ENCODE measurements at regions of chr6 and their contacts with region 1.

Region 1: GRCh38 chr6:73675466-73676098 is 20.4 kb upstream of the CD109 start:
- DNase-seq: peak in 4 of 5 donors; percentile 36 to 65 (median 52)
- H3K4me3 ChIP-seq: no peak overlapping the region
- H3K27ac ChIP-seq: no peak overlapping the region
- H3K4me1 ChIP-seq: no peaks in the 10 kb centered on the region
- H3K27me3 ChIP-seq: no peaks in the 10 kb centered on the region
- CTCF ChIP-seq: peak; percentile 43 to 50 (median 47)
- EP300 ChIP-seq: no peak
- POLR2A ChIP-seq: no peak

Region 2: GRCh38 chr6:73732845-73733675 is 57.5 kb after region 1 on chr6:
- intact Hi-C with region 1: loop called in 1 of 4 experiments (anchors 10 kb)
- DNase-seq: peak; percentile 11 to 56 (median 46)
- H3K4me3 ChIP-seq: no peak overlapping the region
- H3K27ac ChIP-seq: no peak overlapping the region
- H3K4me1 ChIP-seq: no peaks in the 10 kb centered on the region
- H3K27me3 ChIP-seq: no peaks in the 10 kb centered on the region
- CTCF ChIP-seq: peak; percentile 14 to 45 (median 29)
- EP300 ChIP-seq: no peak
- POLR2A ChIP-seq: no peak

Measured in ovary (tissue), 10 donors.